PC-3 (cell line): ENCODE measurements at regions of chr12 and their contacts with region 1.

Region 1: DNA sequence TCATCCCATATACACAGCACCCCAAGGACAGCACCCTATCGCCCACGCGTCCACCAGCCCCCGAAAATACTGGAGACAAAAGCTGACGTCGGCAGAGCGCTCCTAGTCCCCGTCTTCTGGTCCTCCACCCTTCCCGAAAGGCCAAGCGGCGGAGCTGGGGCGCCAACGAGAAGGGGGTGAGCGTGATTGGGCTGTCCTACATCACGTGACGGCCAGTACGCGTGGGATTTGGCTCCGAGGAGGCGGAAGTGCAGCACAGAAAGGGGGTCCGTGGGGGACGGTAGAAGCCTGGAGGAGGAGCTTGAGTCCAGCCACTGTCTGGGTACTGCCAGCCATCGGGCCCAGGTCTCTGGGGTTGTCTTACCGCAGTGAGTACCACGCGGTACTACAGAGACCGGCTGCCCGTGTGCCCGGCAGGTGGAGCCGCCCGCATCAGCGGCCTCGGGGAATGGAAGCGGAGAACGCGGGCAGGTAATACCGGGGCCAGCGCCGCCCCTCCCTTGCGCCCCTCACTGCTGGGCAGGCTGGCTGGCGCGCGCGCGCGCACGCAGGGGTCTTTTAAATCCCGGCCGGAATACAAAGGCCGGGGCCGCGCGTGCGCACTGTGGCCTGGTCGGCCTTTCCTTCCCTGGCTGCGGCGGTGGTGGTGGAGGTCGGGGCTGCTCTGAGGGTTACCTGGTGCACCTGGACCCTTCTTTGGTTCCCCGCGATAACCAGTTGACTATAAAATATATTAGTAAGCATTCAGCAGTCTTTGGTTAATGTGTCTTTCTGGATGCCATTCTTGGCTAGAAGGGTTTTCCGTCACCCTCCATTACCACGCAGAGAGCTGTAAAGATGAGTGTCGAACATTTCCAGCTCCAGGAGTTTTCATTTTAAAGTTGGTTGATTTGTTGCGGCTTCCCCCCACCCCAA is at the start of gene TDG:
- DNase-seq: peak; percentile 99
- ATAC-seq: peak; percentile 95
- H3K4me3 ChIP-seq: peak within 1 kb of the TSS; percentile 91
- H3K27ac ChIP-seq: peak within 1 kb of the TSS; percentile 72
- H3K4me1 ChIP-seq: peaks cover 36% of the 10 kb centered on the region
- H3K27me3 ChIP-seq: no peaks in the 10 kb centered on the region
- CTCF ChIP-seq: no peak
- total RNA-seq, gene TDG: 35.0 and 45.6 TPM in 2 replicates

Region 2: GRCh38 chr12:103909811-103910210 is 56.0 kb before region 1 on chr12:
- CTCF ChIA-PET with region 1: no interaction called
- POLR2A ChIA-PET with region 1: no interaction called
- intact Hi-C with region 1: no loop called
- DNase-seq: no peak
- ATAC-seq: peak; percentile 27; the same call in 1 of the 2 replicates
- H3K4me3 ChIP-seq: no peak overlapping the region
- H3K27ac ChIP-seq: no peak overlapping the region
- H3K4me1 ChIP-seq: no peaks in the 10 kb centered on the region
- H3K27me3 ChIP-seq: no peaks in the 10 kb centered on the region
- CTCF ChIP-seq: no peak

Region 3: DNA sequence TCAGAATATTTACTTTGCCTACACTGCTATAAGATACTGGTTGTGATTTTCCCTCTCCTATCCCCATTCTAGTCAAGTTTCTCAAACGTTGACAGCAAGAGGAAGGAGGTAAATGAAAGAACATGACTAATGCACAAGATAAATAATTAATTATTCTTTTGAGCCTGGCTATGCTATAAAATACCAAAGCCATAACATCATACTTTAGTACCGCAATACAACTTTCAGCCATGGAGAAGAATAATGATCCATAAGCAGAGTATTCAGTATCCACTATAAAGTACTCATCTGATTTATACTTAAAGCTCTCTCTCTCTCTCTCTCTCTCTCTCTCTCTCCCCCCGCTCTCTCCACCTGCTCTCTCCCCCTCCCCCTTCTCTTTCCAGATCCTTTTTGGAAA is 41.1 kb after region 1 on chr12:
- CTCF ChIA-PET with region 1: no interaction called
- POLR2A ChIA-PET with region 1: interaction called, 6 read pairs
- intact Hi-C with region 1: loop called (anchors 2 kb)
- DNase-seq: peak; percentile 84
- ATAC-seq: peak; percentile 82
- H3K4me3 ChIP-seq: no peak overlapping the region; the same call in 1 of the 2 replicates
- H3K27ac ChIP-seq: no peak overlapping the region
- H3K4me1 ChIP-seq: peaks cover 26% of the 10 kb centered on the region
- H3K27me3 ChIP-seq: no peaks in the 10 kb centered on the region
- CTCF ChIP-seq: no peak

Region 4: DNA sequence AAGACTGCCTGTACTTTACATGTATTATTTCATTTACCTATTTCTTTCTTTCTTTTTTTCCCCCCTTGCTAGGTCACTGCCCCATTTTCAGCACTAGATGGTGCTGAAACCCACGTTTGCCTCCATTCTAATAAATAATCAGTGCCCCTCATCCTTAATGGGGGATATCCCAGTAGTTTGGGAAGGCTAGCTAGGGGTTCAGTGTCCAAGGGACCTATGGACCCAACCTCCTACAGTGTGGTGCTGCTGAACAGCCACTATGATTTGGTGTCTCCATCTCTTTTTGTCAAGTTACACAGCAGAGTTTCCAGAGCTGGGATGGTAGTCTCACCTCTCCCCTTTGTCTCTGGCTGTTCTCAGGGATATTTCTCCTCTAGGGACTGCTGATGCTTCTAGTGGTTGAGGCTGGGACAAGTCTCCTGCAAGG is 91.9 kb after region 1 on chr12:
- CTCF ChIA-PET with region 1: no interaction called
- POLR2A ChIA-PET with region 1: no interaction called
- intact Hi-C with region 1: loop called (anchors 5 kb)
- DNase-seq: peak; percentile 55
- ATAC-seq: peak; percentile 63
- H3K4me3 ChIP-seq: no peak overlapping the region
- H3K27ac ChIP-seq: no peak overlapping the region
- H3K4me1 ChIP-seq: peaks cover 6% of the 10 kb centered on the region
- H3K27me3 ChIP-seq: no peaks in the 10 kb centered on the region
- CTCF ChIP-seq: peak; percentile 94

Region 5: GRCh38 chr12:104286538-104287482 is 321.0 kb after region 1 on chr12:
- CTCF ChIA-PET with region 1: no interaction called
- POLR2A ChIA-PET with region 1: no interaction called
- intact Hi-C with region 1: no loop called
- DNase-seq: peak; percentile 99
- ATAC-seq: peak; percentile 63
- H3K4me3 ChIP-seq: peak overlapping the region; percentile 88
- H3K27ac ChIP-seq: peak overlapping the region; percentile 98
- H3K4me1 ChIP-seq: peaks cover 47% of the 10 kb centered on the region
- H3K27me3 ChIP-seq: no peaks in the 10 kb centered on the region
- CTCF ChIP-seq: no peak

Region 6: GRCh38 chr12:105025890-105026289 is 1060.0 kb after region 1 on chr12:
- CTCF ChIA-PET with region 1: no interaction called
- POLR2A ChIA-PET with region 1: no interaction called
- intact Hi-C with region 1: no loop called
- DNase-seq: peak; percentile 15
- ATAC-seq: peak; percentile 54
- H3K4me3 ChIP-seq: no peak overlapping the region
- H3K27ac ChIP-seq: no peak overlapping the region
- H3K4me1 ChIP-seq: no peaks in the 10 kb centered on the region; the same call in 1 of the 2 replicates
- H3K27me3 ChIP-seq: no peaks in the 10 kb centered on the region
- CTCF ChIP-seq: no peak

Region 7: GRCh38 chr12:105107494-105108371 is 1141.9 kb after region 1 on chr12 and contains the start of gene WASHC4:
- CTCF ChIA-PET with region 1: no interaction called
- POLR2A ChIA-PET with region 1: no interaction called
- intact Hi-C with region 1: loop called (anchors 10 kb)
- DNase-seq: peak; percentile 97
- ATAC-seq: peak; percentile 92
- H3K4me3 ChIP-seq: peak within 1 kb of the TSS; percentile 72
- H3K27ac ChIP-seq: peak within 1 kb of the TSS; percentile 76
- H3K4me1 ChIP-seq: peaks cover 24% of the 10 kb centered on the region; the same call in 1 of the 2 replicates
- H3K27me3 ChIP-seq: no peaks in the 10 kb centered on the region
- CTCF ChIP-seq: no peak
- total RNA-seq, gene WASHC4: 38.2 and 46.9 TPM in 2 replicates